Calu3 (cell line): ENCODE measurements at regions of chr16 and their contacts with region 1.

Region 1: DNA sequence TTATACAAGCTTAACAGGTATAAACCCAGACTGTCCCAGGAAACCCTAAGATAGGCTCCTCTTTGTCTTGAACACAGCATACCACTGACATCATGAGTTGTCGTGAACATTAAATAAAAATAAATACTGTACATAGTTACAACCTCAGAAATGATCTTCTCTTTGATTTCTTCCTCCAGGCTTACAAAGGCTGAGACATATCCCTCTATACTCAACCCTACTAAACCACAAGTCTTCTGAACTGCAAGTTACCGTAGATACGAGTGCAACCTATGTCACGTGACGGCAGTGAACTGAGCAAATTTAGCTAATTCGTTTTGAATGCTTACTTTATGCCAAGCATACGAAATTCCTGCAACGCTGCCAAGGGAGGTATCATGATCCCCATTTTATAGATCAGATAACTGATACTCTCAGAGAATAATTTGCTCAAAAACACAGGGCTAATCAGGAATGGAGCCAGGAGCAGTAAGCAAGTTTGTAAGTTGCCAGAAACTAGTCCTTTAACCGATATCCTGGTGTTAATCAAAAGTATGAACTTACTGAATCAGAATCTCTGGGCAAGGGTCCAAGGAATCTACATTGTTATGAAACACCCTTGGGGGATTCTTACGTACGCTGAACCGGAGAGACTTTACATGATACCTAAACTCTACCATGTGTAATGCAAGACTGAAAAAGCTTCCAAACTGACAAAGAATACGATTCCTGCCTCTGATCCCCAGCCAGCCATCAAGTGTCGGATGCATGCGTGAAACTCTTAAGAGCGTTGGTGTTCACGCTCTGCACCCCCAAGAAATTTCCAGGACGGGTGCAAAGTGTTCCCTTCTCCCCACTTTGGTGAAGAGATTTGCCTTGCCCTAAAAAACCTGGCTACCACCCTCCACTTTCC is 106.2 kb downstream of the XYLT1 start:
- DNase-seq: peak; percentile 41
- H3K4me3 Mint-ChIP-seq: peak overlapping the region; percentile 37
- H3K27ac Mint-ChIP-seq: peak overlapping the region; percentile 89
- H3K4me1 Mint-ChIP-seq: peaks cover 20% of the 10 kb centered on the region
- H3K27me3 Mint-ChIP-seq: no peaks in the 10 kb centered on the region
- CTCF ChIP-seq: no peak

Region 2: GRCh38 chr16:17235147-17235815 is 129.3 kb before region 1 on chr16:
- CTCF ChIA-PET with region 1: no interaction called
- intact Hi-C with region 1: no loop called
- DNase-seq: no peak
- H3K4me3 Mint-ChIP-seq: no peak overlapping the region
- H3K27ac Mint-ChIP-seq: no peak overlapping the region
- H3K4me1 Mint-ChIP-seq: no peaks in the 10 kb centered on the region
- H3K27me3 Mint-ChIP-seq: peaks cover 14% of the 10 kb centered on the region
- CTCF ChIP-seq: no peak

Region 3: GRCh38 chr16:17301593-17302135 is 62.9 kb before region 1 on chr16:
- CTCF ChIA-PET with region 1: interaction called, 3 read pairs
- intact Hi-C with region 1: loop called (anchors 5 kb)
- DNase-seq: no peak
- H3K4me3 Mint-ChIP-seq: no peak overlapping the region
- H3K27ac Mint-ChIP-seq: no peak overlapping the region
- H3K4me1 Mint-ChIP-seq: peaks cover 51% of the 10 kb centered on the region
- H3K27me3 Mint-ChIP-seq: no peaks in the 10 kb centered on the region
- CTCF ChIP-seq: no peak

Region 4: GRCh38 chr16:17339764-17340541 is 24.6 kb before region 1 on chr16:
- CTCF ChIA-PET with region 1: interaction called, 3 read pairs
- intact Hi-C with region 1: loop called (anchors 2 kb)
- DNase-seq: peak; percentile 39
- H3K4me3 Mint-ChIP-seq: no peak overlapping the region
- H3K27ac Mint-ChIP-seq: no peak overlapping the region
- H3K4me1 Mint-ChIP-seq: no peaks in the 10 kb centered on the region
- H3K27me3 Mint-ChIP-seq: no peaks in the 10 kb centered on the region
- CTCF ChIP-seq: no peak

Region 5: GRCh38 chr16:17397499-17397891 is 32.9 kb after region 1 on chr16:
- CTCF ChIA-PET with region 1: no interaction called
- intact Hi-C with region 1: loop called (anchors 1 kb)
- DNase-seq: peak; percentile 35
- H3K4me3 Mint-ChIP-seq: no peak overlapping the region
- H3K27ac Mint-ChIP-seq: peak overlapping the region; percentile 69
- H3K4me1 Mint-ChIP-seq: peaks cover 27% of the 10 kb centered on the region
- H3K27me3 Mint-ChIP-seq: no peaks in the 10 kb centered on the region
- CTCF ChIP-seq: no peak

Region 6: DNA sequence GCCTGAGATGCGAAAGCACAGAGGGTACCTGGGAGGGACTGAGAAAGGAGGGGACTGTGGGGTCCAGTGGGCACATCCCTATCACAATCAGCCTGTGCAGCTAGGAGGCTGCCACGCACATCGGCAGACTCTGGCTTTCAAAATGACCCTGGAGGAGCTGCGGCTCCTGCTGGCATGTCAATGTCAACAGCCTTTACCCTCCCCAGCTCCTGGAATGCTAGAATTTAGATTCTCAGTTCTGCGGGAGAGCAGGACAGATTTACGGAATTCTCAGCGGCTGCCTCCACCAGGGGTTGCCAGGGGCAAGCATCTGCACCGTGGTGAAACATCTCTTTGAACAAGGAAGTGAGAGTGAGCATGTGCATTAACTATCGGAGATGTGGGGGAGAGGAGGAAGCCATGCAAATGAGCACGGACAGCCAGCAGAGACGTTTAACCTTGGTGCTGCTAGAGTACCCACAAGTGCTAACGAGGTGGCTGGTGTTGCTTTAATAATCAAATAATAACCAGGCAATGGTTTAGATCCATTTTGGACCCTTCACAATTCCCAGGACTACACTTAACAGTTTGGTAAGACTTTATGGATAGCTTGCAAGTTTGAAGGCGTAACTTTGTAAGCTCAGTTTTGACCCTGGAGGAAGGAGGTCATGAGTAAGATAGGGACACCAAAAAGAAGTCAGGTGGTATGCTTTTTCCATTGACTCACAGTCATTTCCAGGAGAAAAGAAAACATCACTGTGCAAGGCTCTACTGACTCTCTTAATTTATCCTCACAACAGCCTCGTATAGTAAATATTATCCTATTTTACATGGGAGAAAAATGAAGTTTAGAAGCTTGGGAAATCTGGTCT is 52.1 kb after region 1 on chr16:
- CTCF ChIA-PET with region 1: no interaction called
- intact Hi-C with region 1: no loop called
- DNase-seq: no peak
- H3K4me3 Mint-ChIP-seq: no peak overlapping the region
- H3K27ac Mint-ChIP-seq: no peak overlapping the region
- H3K4me1 Mint-ChIP-seq: no peaks in the 10 kb centered on the region
- H3K27me3 Mint-ChIP-seq: no peaks in the 10 kb centered on the region
- CTCF ChIP-seq: no peak

Region 7: GRCh38 chr16:17483351-17483750 is 118.8 kb after region 1 on chr16:
- CTCF ChIA-PET with region 1: no interaction called
- intact Hi-C with region 1: no loop called
- DNase-seq: no peak
- H3K4me3 Mint-ChIP-seq: no peak overlapping the region
- H3K27ac Mint-ChIP-seq: no peak overlapping the region
- H3K4me1 Mint-ChIP-seq: no peaks in the 10 kb centered on the region
- H3K27me3 Mint-ChIP-seq: peaks cover 63% of the 10 kb centered on the region
- CTCF ChIP-seq: no peak

Region 8: DNA sequence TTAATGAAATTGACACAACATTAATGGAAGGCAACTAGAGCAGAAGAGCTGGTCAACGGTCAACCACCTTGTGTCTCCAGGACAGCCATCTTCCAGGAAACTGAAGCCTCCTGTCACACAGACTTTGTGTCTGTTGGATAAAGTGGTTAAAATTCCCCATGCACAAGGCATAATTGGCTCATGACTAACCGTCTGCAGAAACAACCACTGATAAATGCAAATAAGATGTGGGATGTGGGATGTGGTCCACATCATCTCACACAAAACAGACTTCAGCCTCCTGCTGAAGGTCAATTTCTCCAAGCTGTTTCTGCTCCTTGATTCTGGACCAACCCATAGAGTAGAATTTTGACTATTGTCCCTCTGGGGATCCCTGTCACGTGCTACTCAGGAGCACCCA is 133.1 kb after region 1 on chr16:
- CTCF ChIA-PET with region 1: no interaction called
- intact Hi-C with region 1: no loop called
- DNase-seq: no peak
- H3K4me3 Mint-ChIP-seq: no peak overlapping the region
- H3K27ac Mint-ChIP-seq: no peak overlapping the region
- H3K4me1 Mint-ChIP-seq: no peaks in the 10 kb centered on the region
- H3K27me3 Mint-ChIP-seq: peaks cover 24% of the 10 kb centered on the region
- CTCF ChIP-seq: no peak